ENCODE measurements at regions of chr19 and their contacts with region 1.

Region 1: GRCh38 chr19:33176670-33177416 is 17.3 kb upstream of the LRP3 start:
- DNase-seq: peak; percentile 97
- H3K4me3 Mint-ChIP-seq: peak overlapping the region; percentile 97
- H3K27ac Mint-ChIP-seq: peak overlapping the region; percentile 97
- H3K4me1 Mint-ChIP-seq: peaks cover 41% of the 10 kb centered on the region
- H3K27me3 Mint-ChIP-seq: peaks cover 9% of the 10 kb centered on the region

Region 2: GRCh38 chr19:31214086-31214485 is 1962.8 kb before region 1 on chr19:
- intact Hi-C with region 1: loop called (anchors 10 kb)
- DNase-seq: peak; percentile 90
- H3K4me3 Mint-ChIP-seq: peak overlapping the region; percentile 76
- H3K27ac Mint-ChIP-seq: peak overlapping the region; percentile 91
- H3K4me1 Mint-ChIP-seq: peaks cover 33% of the 10 kb centered on the region
- H3K27me3 Mint-ChIP-seq: no peaks in the 10 kb centered on the region

Region 3: DNA sequence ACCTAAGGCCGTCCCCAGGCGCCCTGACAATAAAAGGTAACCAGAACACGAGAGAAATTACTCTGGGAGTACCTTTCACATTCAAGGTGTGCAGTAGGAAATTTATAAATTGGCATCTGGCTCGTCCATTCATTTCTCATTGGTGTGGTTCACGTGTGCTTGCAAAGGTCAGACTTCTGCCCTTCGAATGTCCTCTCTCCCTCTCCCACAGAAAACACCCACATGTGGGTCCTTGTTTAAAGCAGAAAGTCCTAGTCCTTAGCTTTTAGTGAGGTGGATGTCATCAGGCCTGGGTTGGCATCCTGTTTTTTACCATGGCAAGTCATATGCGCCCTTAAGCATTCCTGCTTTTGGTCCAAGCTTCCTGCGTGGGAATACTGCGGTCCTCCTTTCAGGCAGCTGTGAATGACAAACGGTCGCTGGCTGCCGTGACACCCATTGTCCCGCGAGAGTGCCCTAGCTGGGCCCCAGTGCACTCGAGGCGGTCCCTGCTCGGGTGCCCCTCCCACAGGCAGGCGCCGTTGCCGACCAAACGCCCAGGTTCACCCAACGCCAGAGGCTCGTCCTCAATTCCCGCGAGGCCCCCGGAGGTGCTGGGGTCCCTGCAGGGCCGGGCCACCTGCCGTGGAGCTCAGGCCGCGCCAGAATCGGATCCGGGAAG is 485.4 kb before region 1 on chr19 and contains the start of gene NUDT19:
- intact Hi-C with region 1: loop called (anchors 2 kb)
- DNase-seq: peak; percentile 74
- H3K4me3 Mint-ChIP-seq: peak within 1 kb of the TSS; percentile 95
- H3K27ac Mint-ChIP-seq: peak within 1 kb of the TSS; percentile 98
- H3K4me1 Mint-ChIP-seq: peaks cover 54% of the 10 kb centered on the region
- H3K27me3 Mint-ChIP-seq: no peaks in the 10 kb centered on the region
- total RNA-seq, gene NUDT19: 24.4 and 26.2 TPM in 2 replicates

Region 4: DNA sequence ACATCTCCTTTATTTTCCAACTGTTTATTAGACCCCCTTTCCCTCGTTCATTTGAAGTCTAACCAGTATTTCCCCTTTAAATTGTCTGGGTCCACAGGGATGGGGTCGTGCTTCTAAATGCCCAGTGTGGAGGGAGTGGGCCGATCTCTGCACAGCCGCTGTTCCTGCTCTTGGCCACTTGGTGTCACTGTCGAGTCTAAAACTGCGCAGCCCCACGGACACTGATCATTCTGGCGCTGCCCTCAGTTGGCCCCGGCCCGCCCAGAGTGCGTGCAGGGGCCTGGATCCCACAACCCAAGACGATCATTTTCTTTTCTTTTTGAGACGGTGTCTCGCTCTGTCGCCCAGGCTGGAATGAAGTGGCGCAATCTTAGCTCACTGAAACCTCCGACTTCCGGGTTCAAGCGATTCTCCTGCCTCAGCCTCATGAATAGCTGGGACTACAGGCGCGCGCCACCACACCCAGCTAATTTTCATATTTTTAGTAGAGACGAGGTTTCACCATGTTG is 32.9 kb before region 1 on chr19:
- intact Hi-C with region 1: loop called (anchors 2 kb)
- DNase-seq: peak; percentile 43
- H3K4me3 Mint-ChIP-seq: no peak overlapping the region
- H3K27ac Mint-ChIP-seq: no peak overlapping the region
- H3K4me1 Mint-ChIP-seq: peaks cover 5% of the 10 kb centered on the region
- H3K27me3 Mint-ChIP-seq: peaks cover 16% of the 10 kb centered on the region

Region 5: DNA sequence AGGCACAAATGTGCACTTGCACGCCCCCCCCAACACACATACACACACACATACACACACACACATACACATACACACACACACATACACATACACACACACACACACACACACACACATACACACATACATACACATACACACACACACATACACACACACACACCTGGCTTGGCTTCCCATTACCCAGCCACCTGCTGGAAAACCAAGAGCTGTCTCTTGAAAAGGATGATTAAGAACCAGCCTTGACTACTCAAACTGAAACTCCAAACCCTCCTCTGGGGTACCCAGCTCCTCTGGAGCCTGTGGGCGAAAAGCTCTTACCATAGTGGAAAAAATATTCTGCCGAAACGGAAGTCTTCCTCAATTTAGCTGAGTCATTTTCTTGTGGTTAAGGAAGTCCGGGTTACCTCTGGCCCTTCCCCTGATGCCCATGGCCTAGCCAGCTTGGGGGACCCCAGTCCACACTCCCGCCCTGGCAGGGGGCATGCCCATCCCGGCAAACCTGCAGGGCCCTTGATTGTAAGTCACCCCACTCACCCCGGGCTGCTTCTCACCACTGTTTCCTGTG is 103.6 kb after region 1 on chr19:
- intact Hi-C with region 1: loop called (anchors 5 kb)
- DNase-seq: peak; percentile 47
- H3K4me3 Mint-ChIP-seq: peak overlapping the region; percentile 34
- H3K27ac Mint-ChIP-seq: peak overlapping the region; percentile 86
- H3K4me1 Mint-ChIP-seq: peaks cover 20% of the 10 kb centered on the region
- H3K27me3 Mint-ChIP-seq: peaks cover 6% of the 10 kb centered on the region

Region 6: GRCh38 chr19:33438007-33438671 is 261.3 kb after region 1 on chr19:
- intact Hi-C with region 1: no loop called
- DNase-seq: no peak
- H3K4me3 Mint-ChIP-seq: no peak overlapping the region
- H3K27ac Mint-ChIP-seq: no peak overlapping the region
- H3K4me1 Mint-ChIP-seq: no peaks in the 10 kb centered on the region
- H3K27me3 Mint-ChIP-seq: no peaks in the 10 kb centered on the region

Region 7: DNA sequence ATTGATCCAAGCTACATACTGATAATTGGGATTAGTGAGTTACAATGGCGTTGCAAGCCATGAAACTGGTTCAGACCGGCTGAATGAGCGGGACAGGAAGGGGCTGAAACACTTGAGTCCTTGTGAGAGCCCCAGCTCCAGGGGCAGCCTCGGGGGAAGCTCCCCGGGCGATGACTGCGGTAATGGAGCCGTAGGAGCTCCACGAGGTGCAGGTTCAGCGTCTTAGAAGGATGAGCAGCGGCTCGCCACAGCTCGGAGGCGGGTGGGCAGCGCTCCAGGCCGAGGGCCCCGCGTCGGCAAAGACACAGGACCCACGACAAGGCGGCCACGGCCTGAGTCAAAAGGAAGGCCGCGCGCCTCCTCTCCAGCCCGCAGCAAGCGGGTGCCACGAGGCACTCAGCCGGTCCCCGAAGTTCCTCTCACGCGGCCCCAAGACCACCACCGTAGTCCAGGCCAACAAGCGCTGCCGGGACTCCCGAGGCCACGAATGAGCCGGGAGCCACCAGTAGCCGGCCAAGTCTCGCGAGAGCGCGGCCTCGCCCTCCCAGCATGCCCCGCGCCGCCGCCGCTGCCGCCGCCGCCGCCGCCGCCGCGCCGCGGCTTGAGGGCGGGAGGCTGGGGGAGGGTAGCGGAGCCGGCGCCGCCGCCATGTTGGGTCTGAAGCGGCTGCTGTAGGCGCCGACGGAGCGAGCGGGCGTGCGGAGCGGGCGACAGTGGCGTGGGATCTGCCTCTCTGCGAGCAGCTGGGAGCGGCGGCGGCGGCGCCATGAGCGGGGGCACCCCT is 995.2 kb after region 1 on chr19 and contains the start of gene LSM14A:
- intact Hi-C with region 1: loop called (anchors 1 kb)
- DNase-seq: peak; percentile 90
- H3K4me3 Mint-ChIP-seq: peak within 1 kb of the TSS; percentile 100
- H3K27ac Mint-ChIP-seq: peak within 1 kb of the TSS; percentile 100
- H3K4me1 Mint-ChIP-seq: peaks cover 39% of the 10 kb centered on the region
- H3K27me3 Mint-ChIP-seq: peaks cover 5% of the 10 kb centered on the region
- total RNA-seq, gene LSM14A: 118 and 121 TPM in 2 replicates

Measured in activated T-helper 1 cell treated with anti-CD3 and anti-CD28 coated beads, Interleukin-12 subunit alpha, Interleukin-12 subunit beta, Interleukin-2, Interleukin-4 antibody, amounts not matched to agents 30 ng/mL and 10 ng/mL and 1 ng/mL, durations not matched to agents 14 hours and 24 hours and 36 hours (primary cell).